Activated CD8-positive, alpha-beta memory T cell treated with anti-CD3 and anti-CD28 coated beads, Interleukin-2, amount 10 ng/mL, durations not matched to agents 7 days and 5 days (primary cell): ENCODE measurements at regions of chr5 and their contacts with region 1.

Region 1: GRCh38 chr5:115309751-115310370 is 13.4 kb upstream of the CCDC112 start:
- DNase-seq: no peak
- ATAC-seq: peak; percentile 47
- H3K4me3 Mint-ChIP-seq: no peak overlapping the region
- H3K27ac Mint-ChIP-seq: no peak overlapping the region
- H3K4me1 Mint-ChIP-seq: no peaks in the 10 kb centered on the region
- H3K27me3 Mint-ChIP-seq: peaks cover 45% of the 10 kb centered on the region

Region 2: GRCh38 chr5:115351356-115352195 is 41.7 kb after region 1 on chr5:
- CTCF ChIA-PET with region 1: no interaction called
- DNase-seq: no peak
- ATAC-seq: no peak
- H3K4me3 Mint-ChIP-seq: no peak overlapping the region
- H3K27ac Mint-ChIP-seq: no peak overlapping the region
- H3K4me1 Mint-ChIP-seq: peaks cover 1% of the 10 kb centered on the region
- H3K27me3 Mint-ChIP-seq: peaks cover 35% of the 10 kb centered on the region

Region 3: GRCh38 chr5:115575167-115576070 is 265.6 kb after region 1 on chr5:
- CTCF ChIA-PET with region 1: interaction called, 133 read pairs
- DNase-seq: no peak
- ATAC-seq: no peak
- H3K4me3 Mint-ChIP-seq: no peak overlapping the region
- H3K27ac Mint-ChIP-seq: no peak overlapping the region
- H3K4me1 Mint-ChIP-seq: peaks cover 2% of the 10 kb centered on the region
- H3K27me3 Mint-ChIP-seq: peaks cover 12% of the 10 kb centered on the region